ENCODE measurements at regions of chrX and their contacts with region 1.

Region 1: DNA sequence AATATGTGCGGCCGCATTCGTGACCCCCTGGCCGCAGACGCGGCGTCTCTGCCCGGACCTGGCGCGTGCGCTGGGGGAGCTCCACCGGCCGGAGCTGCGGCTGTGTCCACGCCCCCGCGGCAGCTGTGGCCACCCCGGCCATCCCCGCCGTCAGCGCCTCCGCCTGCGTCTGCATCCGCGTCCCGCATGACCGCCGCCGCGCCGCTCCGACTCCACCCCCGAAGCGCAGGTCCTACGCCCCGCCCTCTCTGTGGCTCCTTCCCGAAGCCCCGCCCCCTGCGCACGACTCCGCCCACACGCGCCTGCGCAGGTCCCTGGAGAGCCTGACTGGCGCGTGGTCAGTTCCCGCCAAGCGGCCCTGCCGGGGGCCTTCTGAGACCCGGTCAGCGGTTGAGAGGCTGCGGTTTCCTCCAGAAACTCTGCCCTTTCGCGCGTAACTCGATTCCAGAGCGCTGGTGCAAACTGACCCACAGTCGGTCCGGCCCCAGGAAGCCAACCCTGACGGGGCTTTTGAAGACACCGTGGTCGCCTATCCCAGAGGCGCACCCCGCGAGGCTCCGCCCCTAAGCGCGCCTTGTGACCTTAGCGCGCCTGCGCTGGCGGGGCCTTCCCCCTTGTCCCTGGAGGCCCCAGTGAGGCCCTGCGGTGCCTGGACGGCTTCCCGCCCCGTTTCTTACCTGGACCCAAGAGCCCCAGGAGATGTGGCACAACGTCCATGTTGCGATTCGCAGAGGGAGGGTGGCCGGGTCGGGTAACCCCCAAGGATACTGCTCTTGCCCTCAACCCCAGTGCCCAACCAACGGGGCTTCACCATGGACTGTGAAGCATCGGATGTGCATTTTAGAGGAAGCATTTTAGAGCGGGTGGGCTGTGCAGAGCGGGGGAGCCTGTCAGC is at the start of gene LAGE3:
- DNase-seq: peak; percentile 85 to 97 (median 94)
- ATAC-seq: peak; percentile 97
- H3K4me3 ChIP-seq: peak within 1 kb of the TSS; percentile 79
- H3K4me3 Mint-ChIP-seq: peak within 1 kb of the TSS; percentile 81 to 94 (median 82)
- H3K27ac ChIP-seq: peak within 1 kb of the TSS; percentile 90
- H3K27ac Mint-ChIP-seq: peak within 1 kb of the TSS; percentile 59 to 92 (median 88)
- H3K4me1 ChIP-seq: peaks cover 4 to 14% of the 10 kb centered on the region in 2 donors
- H3K4me1 Mint-ChIP-seq: peaks cover 12 to 44% (median 23%) of the 10 kb centered on the region in 7 donors
- H3K27me3 ChIP-seq: no peaks in the 10 kb centered on the region
- H3K27me3 Mint-ChIP-seq: no peaks in the 10 kb centered on the region
- total RNA-seq, gene LAGE3: 11.6 to 57.0 (median 20.4) TPM

Region 2: DNA sequence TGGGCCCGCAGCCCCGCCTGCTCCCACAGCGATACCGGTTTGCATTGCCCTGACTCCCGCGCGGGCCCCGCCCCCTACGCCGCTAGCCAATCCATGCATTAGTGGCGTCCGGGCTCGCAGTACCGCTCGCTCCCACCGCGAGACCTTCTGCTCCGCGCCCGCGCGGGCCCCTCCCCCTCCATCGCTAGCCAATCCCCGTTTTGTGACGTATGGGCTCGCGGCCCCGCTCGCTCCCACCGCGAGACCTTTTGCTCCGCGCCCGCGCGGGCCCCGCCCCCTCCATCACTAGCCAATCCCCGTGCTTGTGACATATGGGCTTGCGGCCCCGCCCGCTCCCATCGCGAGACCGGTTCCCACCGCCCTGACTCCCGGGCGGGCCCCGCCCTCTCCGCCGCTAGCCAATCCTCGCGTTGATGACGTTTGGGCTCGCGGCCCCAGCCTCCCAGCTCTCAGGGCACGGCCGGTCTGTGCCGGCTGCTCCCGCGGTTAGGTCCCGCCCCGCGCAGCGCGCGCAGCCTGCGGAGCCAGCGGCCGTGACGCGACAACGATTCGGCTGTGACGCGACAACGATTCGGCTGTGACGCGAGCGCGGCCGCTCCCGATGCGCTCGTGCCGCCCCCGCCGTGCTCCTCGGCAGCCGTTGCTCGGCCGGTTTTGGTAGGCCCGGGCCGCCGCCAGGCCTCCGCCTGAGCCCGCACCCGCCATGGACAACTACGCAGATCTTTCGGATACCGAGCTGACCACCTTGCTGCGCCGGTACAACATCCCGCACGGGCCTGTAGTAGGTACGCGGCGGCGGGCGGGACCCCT is 100.0 kb before region 1 on chrX and contains the start of gene EMD:
- CTCF ChIA-PET with region 1: no interaction called
- POLR2A ChIA-PET with region 1: no interaction called
- intact Hi-C with region 1: loop called in 1 of 2 experiments (anchors 1 kb)
- DNase-seq: peak; percentile 88 to 98 (median 96)
- ATAC-seq: peak; percentile 87
- H3K4me3 ChIP-seq: peak within 1 kb of the TSS; percentile 68
- H3K4me3 Mint-ChIP-seq: peak within 1 kb of the TSS; percentile 73 to 88 (median 84)
- H3K27ac ChIP-seq: peak within 1 kb of the TSS; percentile 99
- H3K27ac Mint-ChIP-seq: peak within 1 kb of the TSS; percentile 72 to 95 (median 92)
- H3K4me1 ChIP-seq: peaks cover 10 to 18% of the 10 kb centered on the region in 2 donors
- H3K4me1 Mint-ChIP-seq: peaks cover 4 to 21% (median 12%) of the 10 kb centered on the region in 7 donors
- H3K27me3 ChIP-seq: no peaks in the 10 kb centered on the region
- H3K27me3 Mint-ChIP-seq: no peaks in the 10 kb centered on the region
- total RNA-seq, gene EMD: 53.5 to 141 (median 89.9) TPM

Region 3: DNA sequence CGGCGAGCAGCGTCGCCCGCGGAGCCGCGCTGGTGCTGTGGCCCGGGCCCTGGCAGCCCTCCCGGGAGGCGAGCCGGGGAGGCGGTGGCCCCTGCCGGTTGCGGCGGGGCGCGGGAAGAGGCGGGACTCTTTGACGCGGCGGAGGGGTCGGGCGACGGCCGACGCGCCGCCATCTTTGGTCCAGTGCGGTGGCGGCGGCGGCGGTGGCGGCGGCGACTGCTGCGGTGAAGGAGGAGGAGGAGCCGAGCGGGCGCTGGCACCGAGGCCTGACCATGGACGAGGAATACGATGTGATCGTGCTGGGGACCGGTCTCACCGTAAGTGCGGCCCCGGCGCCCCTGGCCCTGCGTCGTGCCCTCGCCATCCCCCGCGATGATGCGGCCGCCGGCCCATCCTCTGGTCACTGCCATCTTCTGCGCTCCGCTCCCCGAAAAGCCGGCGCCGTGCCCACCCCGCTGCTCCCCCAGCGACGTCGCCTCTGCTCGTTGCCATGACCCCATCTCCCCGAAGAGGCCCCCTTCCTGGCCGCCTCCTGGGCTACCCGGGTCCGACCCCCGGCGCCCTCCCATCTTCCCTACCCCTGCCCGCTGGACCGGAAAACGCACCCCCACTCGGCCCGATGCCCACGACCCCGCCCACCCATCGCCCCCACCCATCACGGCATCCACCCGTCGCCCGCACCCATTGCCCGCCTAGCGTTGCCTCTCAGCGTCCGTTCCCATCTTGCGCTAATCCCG is 41.8 kb before region 1 on chrX and contains the start of gene GDI1:
- CTCF ChIA-PET with region 1: no interaction called
- POLR2A ChIA-PET with region 1: interaction called, 3 read pairs
- intact Hi-C with region 1: loop called (anchors 2 to 5 kb)
- DNase-seq: peak; percentile 39 to 72 (median 62)
- ATAC-seq: peak; percentile 82
- H3K4me3 ChIP-seq: peak within 1 kb of the TSS; percentile 48
- H3K4me3 Mint-ChIP-seq: peak within 1 kb of the TSS; percentile 75 to 90 (median 86)
- H3K27ac ChIP-seq: peak within 1 kb of the TSS; percentile 85
- H3K27ac Mint-ChIP-seq: peak within 1 kb of the TSS; percentile 82 to 97 (median 91)
- H3K4me1 ChIP-seq: no peaks in the 10 kb centered on the region
- H3K4me1 Mint-ChIP-seq: peaks cover 0 to 36% (median 17%) of the 10 kb centered on the region in 7 donors
- H3K27me3 ChIP-seq: no peaks in the 10 kb centered on the region
- H3K27me3 Mint-ChIP-seq: no peaks in the 10 kb centered on the region
- total RNA-seq, gene GDI1: 106 to 174 (median 140) TPM

Region 4: GRCh38 chrX:154458114-154458953 is 20.6 kb before region 1 on chrX and contains the start of gene PLXNA3:
- CTCF ChIA-PET with region 1: no interaction called
- POLR2A ChIA-PET with region 1: interaction called, 31 read pairs
- intact Hi-C with region 1: loop called (anchors 1 kb)
- DNase-seq: peak; percentile 40 to 74 (median 68)
- ATAC-seq: peak; percentile 90
- H3K4me3 ChIP-seq: peak within 1 kb of the TSS; percentile 45
- H3K4me3 Mint-ChIP-seq: peak within 1 kb of the TSS; percentile 79 to 97 (median 94)
- H3K27ac ChIP-seq: peak within 1 kb of the TSS; percentile 70
- H3K27ac Mint-ChIP-seq: peak within 1 kb of the TSS; percentile 86 to 98 (median 94)
- H3K4me1 ChIP-seq: peaks cover 0 to 3% of the 10 kb centered on the region in 2 donors
- H3K4me1 Mint-ChIP-seq: peaks cover 4 to 16% (median 9%) of the 10 kb centered on the region in 7 donors
- H3K27me3 ChIP-seq: no peaks in the 10 kb centered on the region
- H3K27me3 Mint-ChIP-seq: no peaks in the 10 kb centered on the region
- total RNA-seq, gene PLXNA3: 32.9 to 45.7 (median 43.3) TPM

Region 5: GRCh38 chrX:154515878-154516655 is 37.1 kb after region 1 on chrX and contains the start of gene FAM3A:
- CTCF ChIA-PET with region 1: no interaction called
- POLR2A ChIA-PET with region 1: interaction called, 7 read pairs
- intact Hi-C with region 1: loop called (anchors 1 to 2 kb)
- DNase-seq: peak; percentile 85 to 91 (median 88)
- ATAC-seq: peak; percentile 99
- H3K4me3 ChIP-seq: peak within 1 kb of the TSS; percentile 62
- H3K4me3 Mint-ChIP-seq: peak within 1 kb of the TSS; percentile 79 to 93 (median 86)
- H3K27ac ChIP-seq: peak within 1 kb of the TSS; percentile 93
- H3K27ac Mint-ChIP-seq: peak within 1 kb of the TSS; percentile 56 to 95 (median 90)
- H3K4me1 ChIP-seq: peaks cover 6 to 12% of the 10 kb centered on the region in 2 donors
- H3K4me1 Mint-ChIP-seq: peaks cover 13 to 34% (median 27%) of the 10 kb centered on the region in 7 donors
- H3K27me3 ChIP-seq: no peaks in the 10 kb centered on the region
- H3K27me3 Mint-ChIP-seq: no peaks in the 10 kb centered on the region
- total RNA-seq, gene FAM3A: 37.6 to 63.7 (median 50.9) TPM

Measured in naive thymus-derived CD4-positive, alpha-beta T cell (primary cell).